ENCODE measurements at regions of chr7 and their contacts with region 1.

Region 1: DNA sequence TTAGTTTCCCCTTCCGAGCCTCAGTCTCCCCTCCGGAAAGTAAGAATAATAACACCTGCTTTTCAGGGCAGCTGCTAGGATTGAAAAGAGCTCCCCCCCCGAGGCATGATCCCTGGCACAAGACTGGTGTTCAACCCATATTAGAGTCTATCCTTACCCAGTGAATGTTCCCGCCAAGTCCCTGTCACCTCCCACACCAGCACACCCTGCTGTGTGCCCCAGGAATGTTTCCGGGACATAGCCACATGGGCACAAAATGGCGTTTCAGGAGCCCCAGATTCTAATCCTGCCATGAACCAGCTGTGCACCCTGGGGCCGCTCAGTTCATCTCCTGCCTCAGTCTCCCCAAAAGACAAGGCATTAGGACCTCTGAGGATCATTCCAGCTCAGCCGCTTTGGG is 563 bp downstream of the MUC17 start:
- DNase-seq: no peak
- ATAC-seq: no peak
- H3K4me3 ChIP-seq: no peak overlapping the region
- H3K4me3 Mint-ChIP-seq: no peak overlapping the region
- H3K27ac ChIP-seq: no peak overlapping the region
- H3K27ac Mint-ChIP-seq: no peak overlapping the region
- H3K4me1 ChIP-seq: peaks cover 13 to 17% of the 10 kb centered on the region in 2 donors
- H3K4me1 Mint-ChIP-seq: peaks cover 26% of the 10 kb centered on the region
- H3K27me3 ChIP-seq: peaks cover 0 to 30% (median 0%) of the 10 kb centered on the region in 4 experiments
- H3K27me3 Mint-ChIP-seq: peaks cover 31% of the 10 kb centered on the region
- CTCF ChIP-seq: no peak

Region 2: DNA sequence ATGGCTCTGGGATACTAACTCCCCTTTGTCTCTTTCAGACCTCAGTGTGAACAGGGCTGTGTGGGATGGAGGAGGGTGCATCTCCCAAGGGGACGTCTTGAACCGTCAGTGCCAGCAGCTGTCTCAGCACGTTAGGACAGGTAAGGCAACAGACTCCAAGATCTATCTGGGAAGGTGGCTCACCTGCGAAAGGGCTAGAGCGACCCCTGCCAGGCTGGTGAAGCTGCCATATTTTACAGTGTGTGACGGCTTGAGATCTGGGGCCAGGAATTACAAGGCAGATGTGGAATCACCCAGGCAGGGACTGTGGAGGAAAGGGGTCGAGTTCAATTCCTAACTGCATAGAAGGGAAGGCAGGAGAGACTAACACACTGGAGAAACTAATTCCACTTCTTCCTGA is 10.6 kb after region 1 on chr7:
- CTCF ChIA-PET with region 1: no interaction called
- POLR2A ChIA-PET with region 1: interaction called, 13 read pairs
- intact Hi-C with region 1: no loop called
- DNase-seq: no peak
- ATAC-seq: no peak
- H3K4me3 ChIP-seq: no peak overlapping the region
- H3K4me3 Mint-ChIP-seq: no peak overlapping the region
- H3K27ac ChIP-seq: no peak overlapping the region
- H3K27ac Mint-ChIP-seq: no peak overlapping the region
- H3K4me1 ChIP-seq: no peaks in the 10 kb centered on the region
- H3K4me1 Mint-ChIP-seq: no peaks in the 10 kb centered on the region
- H3K27me3 ChIP-seq: peaks cover 0 to 6% (median 0%) of the 10 kb centered on the region in 4 experiments
- H3K27me3 Mint-ChIP-seq: peaks cover 9% of the 10 kb centered on the region
- CTCF ChIP-seq: no peak

Measured in B cell (primary cell).